H1 (cell line): ENCODE measurements at regions of chr11 and their contacts with region 1.

Region 1: GRCh38 chr11:75474878-75475766 is 42.1 kb upstream of the KLHL35 start:
- DNase-seq: peak; percentile 38 to 86
- H3K4me3 ChIP-seq: peak overlapping the region in 2 of 4 experiments; percentile 17 to 55; a peak in 5 of 8 replicates
- H3K27ac ChIP-seq: no peak overlapping the region; the same call in 1 of the 2 replicates
- H3K4me1 ChIP-seq: peaks cover 3 to 8% (median 4%) of the 10 kb centered on the region in 4 experiments; a peak in 5 of 7 replicates
- H3K27me3 ChIP-seq: no peaks in the 10 kb centered on the region
- CTCF ChIP-seq: no peak
- EP300 ChIP-seq: no peak
- POLR2A ChIP-seq: peak in 1 of 2 experiments; percentile 47; a peak in 1 of 3 replicates
- RAD21 ChIP-seq: no peak

Region 2: DNA sequence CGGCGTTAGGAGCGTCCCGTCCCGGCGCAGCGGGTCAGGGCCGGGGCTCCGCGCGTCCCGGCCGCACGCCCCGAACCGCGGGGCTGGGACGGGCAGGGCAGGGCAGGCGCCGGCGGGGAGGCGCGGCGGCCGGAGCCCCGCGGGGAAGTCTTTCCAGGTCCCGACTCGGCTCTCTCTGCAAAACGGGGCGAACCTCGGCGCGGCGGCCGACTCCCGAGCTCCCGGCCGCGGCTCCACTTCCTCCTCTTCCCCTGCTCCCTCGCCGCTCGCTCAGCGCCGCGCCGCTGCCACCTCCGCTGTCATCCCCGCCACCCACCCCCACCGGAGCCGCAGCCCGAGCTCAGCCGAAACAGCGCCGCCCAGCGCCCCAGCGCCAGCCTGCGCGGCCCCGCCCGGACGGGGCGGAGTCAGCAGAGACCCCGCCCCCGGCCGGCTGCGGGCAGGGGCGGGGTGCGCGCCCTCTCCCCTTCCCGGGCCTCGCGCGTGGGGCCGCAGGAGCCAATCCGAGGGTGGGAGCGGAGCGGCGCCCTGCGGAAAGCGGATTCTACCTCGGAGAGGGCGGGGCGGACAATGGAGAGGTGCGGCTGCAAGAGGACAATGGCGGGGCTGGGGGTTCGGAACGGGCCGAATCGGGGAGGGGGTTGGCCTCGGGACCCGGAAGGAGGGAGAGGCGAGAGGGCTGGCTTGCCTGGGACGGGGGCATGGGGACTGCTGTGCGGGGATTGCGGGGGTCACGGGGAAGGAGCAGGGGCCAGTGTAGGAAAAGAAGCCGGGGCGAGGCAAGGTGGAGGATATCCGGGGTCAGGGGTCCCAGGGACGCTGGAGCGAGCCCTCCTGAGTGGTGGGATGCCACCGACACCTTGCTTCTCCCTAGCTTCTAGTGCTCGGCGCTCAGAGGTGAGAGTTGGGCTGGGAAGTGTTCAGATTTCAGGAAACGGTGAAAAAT is 50.7 kb after region 1 on chr11 and contains the start of gene GDPD5:
- CTCF ChIA-PET with region 1: interaction called, 603 read pairs
- POLR2A ChIA-PET with region 1: interaction called, 6 read pairs
- DNase-seq: peak; percentile 54 to 87
- H3K4me3 ChIP-seq: peak within 1 kb of the TSS; percentile 47 to 77 (median 76)
- H3K27ac ChIP-seq: no peak within 1 kb of the TSS
- H3K4me1 ChIP-seq: peaks cover 0 to 7% (median 1%) of the 10 kb centered on the region in 4 experiments; a peak in 2 of 7 replicates
- H3K27me3 ChIP-seq: peaks cover 14 to 33% (median 19%) of the 10 kb centered on the region in 4 experiments; a peak in 6 of 7 replicates
- CTCF ChIP-seq: peak; percentile 58 to 65 (median 64)
- EP300 ChIP-seq: no peak
- POLR2A ChIP-seq: peak in 1 of 2 experiments; percentile 54; a peak in 1 of 3 replicates
- RAD21 ChIP-seq: peak; percentile 15 to 51; a peak in 3 of 4 replicates
- total RNA-seq, gene GDPD5: 8.1 and 8.6 TPM in 2 replicates